IMR-90 (cell line): ENCODE measurements at regions of chr20 and their contacts with region 1.

Region 1: GRCh38 chr20:17898548-17898994 is 70.0 kb downstream of the SNX5 start:
- DNase-seq: peak; percentile 75
- ATAC-seq: peak; percentile 70
- H3K4me3 ChIP-seq: no peak overlapping the region
- H3K27ac ChIP-seq: no peak overlapping the region
- H3K4me1 ChIP-seq: peaks cover 13% of the 10 kb centered on the region
- H3K27me3 ChIP-seq: no peaks in the 10 kb centered on the region
- CTCF ChIP-seq: peak; percentile 95
- POLR2A ChIP-seq: 0 out of 2 replicates have a peak, but pooled peaks have one; percentile 34
- RAD21 ChIP-seq: peak; percentile 99

Region 2: GRCh38 chr20:17654649-17655285 is 243.8 kb before region 1 on chr20:
- CTCF ChIA-PET with region 1: no interaction called
- POLR2A ChIA-PET with region 1: no interaction called
- dilution Hi-C with region 1: no loop called
- in situ Hi-C with region 1: no loop called
- intact Hi-C with region 1: loop called (anchors 1 kb)
- DNase-seq: peak; percentile 52
- ATAC-seq: 0 out of 2 replicates have a peak, but pooled peaks have one; percentile 23
- H3K4me3 ChIP-seq: no peak overlapping the region
- H3K27ac ChIP-seq: peak overlapping the region; percentile 25; the same call in 1 of the 2 replicates
- H3K4me1 ChIP-seq: peaks cover 42% of the 10 kb centered on the region
- H3K27me3 ChIP-seq: no peaks in the 10 kb centered on the region
- CTCF ChIP-seq: peak; percentile 76
- POLR2A ChIP-seq: no peak
- RAD21 ChIP-seq: peak; percentile 65

Region 3: DNA sequence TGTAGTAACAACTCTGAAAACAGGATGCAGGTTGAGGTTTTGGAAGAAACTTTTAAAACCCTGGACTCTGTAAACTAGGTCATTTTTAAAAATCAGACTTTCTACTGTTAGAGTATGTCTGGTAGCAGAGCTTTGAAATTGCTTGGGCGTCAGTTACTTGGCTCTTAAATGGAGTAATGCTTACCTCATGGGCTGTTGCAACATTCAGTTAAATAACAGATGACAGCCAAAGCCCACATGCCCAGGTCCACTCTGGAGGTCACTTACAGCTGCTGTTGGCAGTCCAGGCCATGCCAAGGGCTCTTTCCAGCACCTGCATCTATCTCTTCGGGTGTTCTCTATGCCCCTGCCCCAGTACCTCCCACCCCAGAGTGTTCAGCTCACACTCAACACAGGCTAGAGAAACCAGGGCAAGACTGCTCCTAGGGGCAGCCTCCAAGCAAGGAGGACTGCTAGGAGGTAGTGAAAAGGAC is 102.4 kb before region 1 on chr20:
- CTCF ChIA-PET with region 1: no interaction called
- POLR2A ChIA-PET with region 1: no interaction called
- dilution Hi-C with region 1: no loop called
- in situ Hi-C with region 1: no loop called
- intact Hi-C with region 1: no loop called
- DNase-seq: peak; percentile 68
- ATAC-seq: peak; percentile 84
- H3K4me3 ChIP-seq: no peak overlapping the region
- H3K27ac ChIP-seq: no peak overlapping the region
- H3K4me1 ChIP-seq: peaks cover 2% of the 10 kb centered on the region; the same call in 1 of the 2 replicates
- H3K27me3 ChIP-seq: peaks cover 2% of the 10 kb centered on the region; the same call in 1 of the 2 replicates
- CTCF ChIP-seq: no peak
- POLR2A ChIP-seq: no peak
- RAD21 ChIP-seq: no peak

Region 4: DNA sequence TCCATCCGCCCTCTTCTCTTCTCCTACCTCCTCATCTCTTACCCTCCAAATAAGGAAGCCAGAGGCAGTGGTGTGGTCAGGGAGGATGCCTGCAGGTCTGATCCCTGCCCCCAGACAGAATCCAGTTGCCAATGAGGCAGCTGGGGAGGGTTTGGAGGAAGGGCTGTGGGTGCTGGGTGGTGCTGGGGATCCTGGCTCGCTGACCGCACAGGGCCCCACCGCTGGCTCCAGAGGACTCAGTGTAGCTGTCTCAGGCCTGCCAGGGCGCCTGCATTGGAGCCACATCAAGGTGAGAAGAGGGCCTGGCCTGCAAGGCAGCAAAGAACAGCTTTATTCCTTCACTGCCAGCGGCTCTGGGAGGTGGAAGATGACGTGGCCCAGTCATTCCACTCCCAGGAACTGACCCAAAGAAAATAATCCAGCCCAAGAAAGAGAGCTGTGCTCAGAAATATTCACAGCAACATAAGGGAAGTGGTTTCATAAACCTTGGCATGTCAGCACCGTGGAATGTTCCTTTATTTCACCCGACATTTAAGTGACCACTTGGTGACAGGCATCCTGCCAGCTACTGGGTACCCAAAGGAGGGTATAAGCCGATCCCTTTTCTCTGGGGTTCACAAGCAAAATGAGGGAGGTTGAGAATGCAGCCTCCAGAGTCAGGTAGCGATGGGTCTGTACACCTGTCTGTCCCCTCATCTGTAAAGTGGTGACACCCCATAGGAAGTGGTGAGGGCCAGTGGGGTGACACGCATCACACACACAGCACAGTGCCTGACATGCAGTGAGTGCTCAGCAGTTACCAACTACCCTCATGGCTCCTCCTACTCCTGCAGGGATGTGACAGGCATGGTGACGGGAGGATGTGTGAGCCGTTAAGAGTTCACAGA is 55.1 kb before region 1 on chr20:
- CTCF ChIA-PET with region 1: no interaction called
- POLR2A ChIA-PET with region 1: no interaction called
- dilution Hi-C with region 1: no loop called
- in situ Hi-C with region 1: no loop called
- intact Hi-C with region 1: loop called (anchors 5 kb)
- DNase-seq: peak; percentile 97
- ATAC-seq: peak; percentile 87
- H3K4me3 ChIP-seq: no peak overlapping the region; the same call in 1 of the 2 replicates
- H3K27ac ChIP-seq: peak overlapping the region; percentile 90
- H3K4me1 ChIP-seq: peaks cover 24% of the 10 kb centered on the region
- H3K27me3 ChIP-seq: no peaks in the 10 kb centered on the region
- CTCF ChIP-seq: no peak
- POLR2A ChIP-seq: no peak; the same call in 1 of the 2 replicates
- RAD21 ChIP-seq: peak; percentile 23; the same call in 1 of the 2 replicates

Region 5: GRCh38 chr20:18090044-18090443 is 191.5 kb after region 1 on chr20:
- CTCF ChIA-PET with region 1: no interaction called
- POLR2A ChIA-PET with region 1: no interaction called
- dilution Hi-C with region 1: no loop called
- in situ Hi-C with region 1: no loop called
- intact Hi-C with region 1: no loop called
- DNase-seq: no peak
- ATAC-seq: no peak
- H3K4me3 ChIP-seq: no peak overlapping the region
- H3K27ac ChIP-seq: no peak overlapping the region
- H3K4me1 ChIP-seq: no peaks in the 10 kb centered on the region
- H3K27me3 ChIP-seq: peaks cover 6% of the 10 kb centered on the region
- CTCF ChIP-seq: no peak
- POLR2A ChIP-seq: no peak
- RAD21 ChIP-seq: no peak